ENCODE measurements at regions of chr18 and their contacts with region 1.

Region 1: DNA sequence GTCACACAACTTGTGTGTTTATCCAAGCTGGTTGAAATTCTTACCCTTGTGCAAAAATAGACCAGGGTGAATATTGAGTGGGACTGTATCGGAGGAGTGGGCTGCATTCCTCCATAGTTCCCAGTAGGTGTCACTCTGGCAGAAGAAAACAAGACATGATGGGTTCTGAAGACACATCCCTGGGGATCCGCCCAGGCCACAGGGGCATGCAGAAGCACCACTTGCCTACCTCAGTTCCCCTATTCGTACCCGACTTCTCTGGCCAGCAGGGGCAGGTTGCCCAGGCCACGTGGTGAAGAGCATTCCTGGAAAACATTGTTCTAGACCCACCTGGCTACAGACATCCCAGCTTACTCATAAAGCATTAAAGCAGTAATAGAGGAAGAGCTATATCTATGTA is 168.2 kb downstream of the FAM210A start:
- DNase-seq: no peak
- H3K4me3 ChIP-seq: no peak overlapping the region
- H3K27ac ChIP-seq: no peak overlapping the region
- H3K4me1 ChIP-seq: peaks cover 22 to 37% (median 33%) of the 10 kb centered on the region in 4 donors
- H3K27me3 ChIP-seq: no peaks in the 10 kb centered on the region
- CTCF ChIP-seq: peak; percentile 49 to 63 (median 58)
- EP300 ChIP-seq: no peak
- POLR2A ChIP-seq: no peak

Region 2: DNA sequence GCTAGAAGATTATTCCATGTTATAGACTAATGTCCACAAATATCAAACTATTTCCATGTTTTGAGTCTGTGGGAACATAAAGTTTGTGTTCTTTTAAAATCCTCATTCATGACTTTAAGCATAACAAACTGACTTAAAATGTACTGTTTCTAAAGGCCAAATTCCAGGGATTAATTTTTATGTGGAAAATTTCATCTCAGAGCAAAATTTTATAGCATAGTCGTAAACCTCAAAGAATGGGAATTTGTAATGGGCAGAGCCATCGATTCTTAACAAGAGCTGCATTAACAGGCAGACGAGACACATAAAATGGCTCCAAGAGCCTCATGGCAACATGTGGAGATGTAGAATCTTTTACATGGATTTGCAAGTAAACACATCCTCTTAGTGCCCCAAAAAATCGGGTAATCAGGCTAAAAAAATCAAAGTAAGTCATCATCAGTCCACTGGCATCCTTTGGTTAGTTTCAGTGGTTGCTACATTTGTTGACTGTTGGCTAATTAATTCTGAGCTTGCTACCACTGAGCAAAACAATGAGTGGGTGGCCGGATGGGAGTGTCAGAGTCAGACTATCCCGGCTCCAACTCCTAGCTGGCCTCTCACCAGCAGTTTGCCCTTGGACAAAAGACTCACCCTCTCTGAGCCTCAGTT is 48.6 kb after region 1 on chr18:
- intact Hi-C with region 1: no loop called
- DNase-seq: peak; percentile 19
- H3K4me3 ChIP-seq: no peak overlapping the region
- H3K27ac ChIP-seq: no peak overlapping the region
- H3K4me1 ChIP-seq: peaks cover 17 to 27% (median 21%) of the 10 kb centered on the region in 4 donors
- H3K27me3 ChIP-seq: no peaks in the 10 kb centered on the region
- CTCF ChIP-seq: no peak
- EP300 ChIP-seq: no peak
- POLR2A ChIP-seq: no peak

Region 3: DNA sequence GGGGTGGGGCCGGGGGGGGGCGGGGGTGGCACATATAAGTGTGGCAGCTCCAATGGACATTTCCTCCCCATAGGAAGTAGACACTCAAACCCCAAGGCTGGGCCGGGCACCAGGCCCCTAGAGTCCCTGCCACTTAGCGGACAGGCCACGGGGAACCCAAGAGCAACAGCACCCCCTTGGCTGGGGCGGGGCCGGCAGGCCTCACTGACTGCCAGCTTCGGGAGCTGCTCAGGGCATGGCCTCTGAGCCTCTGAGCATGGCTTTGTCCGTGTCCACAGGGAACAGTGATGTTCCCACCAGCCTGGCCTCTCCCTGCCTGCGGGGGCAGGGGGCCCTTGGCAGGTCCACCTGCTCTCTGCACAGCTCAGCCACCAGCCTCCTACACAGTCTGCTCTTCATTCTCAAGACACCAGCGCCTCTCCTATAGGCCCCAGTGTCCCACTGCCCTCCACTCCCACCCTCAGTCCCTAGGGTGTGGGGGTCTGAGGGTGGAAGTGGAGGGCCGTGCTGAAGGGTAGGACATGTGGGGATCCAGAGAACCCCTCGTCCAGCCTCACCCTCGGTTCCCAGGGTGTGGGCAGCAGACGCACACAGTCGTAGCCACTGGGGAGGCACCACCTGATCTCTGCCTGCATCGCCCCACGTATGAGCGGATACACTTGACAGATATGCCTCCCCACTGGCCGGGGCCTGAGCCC is 61.5 kb after region 1 on chr18:
- intact Hi-C with region 1: loop called (anchors 5 kb)
- DNase-seq: peak; percentile 64
- H3K4me3 ChIP-seq: no peak overlapping the region
- H3K27ac ChIP-seq: no peak overlapping the region
- H3K4me1 ChIP-seq: peaks cover 9 to 26% (median 12%) of the 10 kb centered on the region in 4 donors
- H3K27me3 ChIP-seq: no peaks in the 10 kb centered on the region
- CTCF ChIP-seq: no peak
- EP300 ChIP-seq: no peak
- POLR2A ChIP-seq: no peak

Region 4: GRCh38 chr18:13730481-13730880 is 172.4 kb after region 1 on chr18:
- intact Hi-C with region 1: loop called (anchors 10 kb)
- DNase-seq: no peak
- H3K4me3 ChIP-seq: no peak overlapping the region
- H3K27ac ChIP-seq: no peak overlapping the region
- H3K4me1 ChIP-seq: peaks cover 14 to 33% (median 24%) of the 10 kb centered on the region in 4 donors
- H3K27me3 ChIP-seq: no peaks in the 10 kb centered on the region
- CTCF ChIP-seq: no peak
- EP300 ChIP-seq: no peak
- POLR2A ChIP-seq: no peak

Measured in esophagus muscularis mucosa (tissue), 4 donors.